Natural killer cell (primary cell): ENCODE measurements at regions of chr17 and their contacts with region 1.

Region 1: GRCh38 chr17:18314731-18315561 is at the starts of genes SMCR8 and TOP3A:
- DNase-seq: peak; percentile 92 to 97
- ATAC-seq: peak; percentile 91 to 97 (median 92)
- H3K4me3 ChIP-seq: peak within 1 kb of the TSS; percentile 81
- H3K4me3 Mint-ChIP-seq: peak within 1 kb of the TSS; percentile 97
- H3K27ac ChIP-seq: peak within 1 kb of the TSS; percentile 89
- H3K27ac Mint-ChIP-seq: peak within 1 kb of the TSS; percentile 91 to 99
- H3K4me1 ChIP-seq: peaks cover 57% of the 10 kb centered on the region
- H3K4me1 Mint-ChIP-seq: peaks cover 73 to 78% of the 10 kb centered on the region in 2 donors
- H3K27me3 ChIP-seq: no peaks in the 10 kb centered on the region
- H3K27me3 Mint-ChIP-seq: no peaks in the 10 kb centered on the region
- CTCF ChIP-seq: no peak
- total RNA-seq, gene SMCR8: 33.5 to 48.5 (median 39.2) TPM
- total RNA-seq, gene TOP3A: 38.1 to 59.7 (median 53.2) TPM

Region 2: DNA sequence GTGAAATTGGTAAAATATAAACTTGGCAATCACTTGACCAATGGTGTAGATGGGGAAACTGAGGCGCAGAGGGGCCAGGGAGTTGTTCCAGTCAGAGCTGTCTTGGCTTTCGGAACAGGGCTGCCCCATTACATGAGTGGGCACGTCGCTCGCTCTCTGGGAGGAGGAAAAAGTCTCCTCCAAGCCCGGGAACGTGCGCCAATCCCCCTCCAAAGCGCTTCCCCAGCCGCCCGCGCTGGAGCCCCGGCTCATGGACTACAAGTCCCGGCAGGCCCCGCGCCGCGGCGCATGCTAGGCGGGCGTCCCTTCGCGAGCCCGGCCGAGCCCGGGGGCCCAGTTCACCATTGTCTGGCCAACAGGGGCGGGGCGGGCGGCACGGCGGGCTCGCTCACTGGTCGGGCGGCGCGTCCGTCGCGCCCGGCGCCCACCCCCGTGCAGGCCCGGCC is 89.8 kb before region 1 on chr17:
- intact Hi-C with region 1: loop called (anchors 1 kb)
- DNase-seq: peak; percentile 95 to 96
- ATAC-seq: peak; percentile 97 to 99 (median 98)
- H3K4me3 ChIP-seq: peak overlapping the region; percentile 20
- H3K4me3 Mint-ChIP-seq: peak overlapping the region; percentile 53
- H3K27ac ChIP-seq: peak overlapping the region; percentile 49
- H3K27ac Mint-ChIP-seq: peak overlapping the region; percentile 31 to 82
- H3K4me1 ChIP-seq: peaks cover 19% of the 10 kb centered on the region
- H3K4me1 Mint-ChIP-seq: peaks cover 27 to 28% of the 10 kb centered on the region in 2 donors
- H3K27me3 ChIP-seq: no peaks in the 10 kb centered on the region
- H3K27me3 Mint-ChIP-seq: no peaks in the 10 kb centered on the region
- CTCF ChIP-seq: no peak

Region 3: DNA sequence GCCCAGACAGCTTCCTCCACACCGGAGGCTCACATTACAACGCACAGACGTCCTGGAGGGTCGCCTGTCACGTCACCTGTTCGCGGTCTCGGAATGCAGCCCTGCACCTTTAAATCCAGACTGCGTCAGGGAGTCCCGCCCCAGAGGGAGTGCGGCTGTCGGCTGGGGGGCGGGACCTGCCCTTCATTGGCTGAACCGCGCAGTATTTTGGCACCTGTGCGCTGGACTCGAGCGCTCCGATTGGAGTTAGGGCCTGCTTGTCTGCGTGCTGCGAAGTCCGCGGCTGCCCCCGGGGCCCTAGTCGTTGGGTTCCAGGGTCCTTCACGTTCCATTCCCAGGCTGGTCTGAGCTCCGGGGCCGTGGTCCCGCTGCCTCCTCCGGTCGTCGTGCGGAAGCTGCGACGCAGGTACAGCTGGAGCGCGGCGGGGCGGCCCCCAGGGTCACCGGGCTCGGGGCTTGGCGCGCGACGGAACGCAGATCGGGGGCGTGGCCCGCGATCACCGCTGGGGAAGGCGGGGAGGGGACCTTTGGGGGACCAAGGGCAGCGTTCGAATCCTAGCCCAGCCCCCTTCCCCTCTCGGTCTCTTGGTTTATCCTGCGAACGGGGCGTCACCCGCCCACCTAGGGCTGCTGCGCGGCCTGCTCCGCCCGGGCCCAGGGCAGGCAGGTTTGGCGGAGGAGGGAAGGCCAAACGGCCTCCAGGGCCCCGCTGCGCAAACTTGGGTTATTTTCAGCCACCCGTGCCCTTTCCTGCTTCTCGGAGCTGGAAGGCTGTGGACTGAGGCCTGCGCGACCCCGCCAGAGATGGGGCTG is 54.4 kb before region 1 on chr17 and contains the start of gene MIEF2:
- intact Hi-C with region 1: loop called (anchors 2 kb)
- DNase-seq: peak; percentile 88 to 95
- ATAC-seq: peak; percentile 87 to 92 (median 90)
- H3K4me3 ChIP-seq: peak within 1 kb of the TSS; percentile 76
- H3K4me3 Mint-ChIP-seq: peak within 1 kb of the TSS; percentile 83
- H3K27ac ChIP-seq: peak within 1 kb of the TSS; percentile 88
- H3K27ac Mint-ChIP-seq: peak within 1 kb of the TSS; percentile 70 to 81
- H3K4me1 ChIP-seq: peaks cover 51% of the 10 kb centered on the region
- H3K4me1 Mint-ChIP-seq: peaks cover 17 to 36% of the 10 kb centered on the region in 2 donors
- H3K27me3 ChIP-seq: no peaks in the 10 kb centered on the region
- H3K27me3 Mint-ChIP-seq: no peaks in the 10 kb centered on the region
- CTCF ChIP-seq: no peak
- total RNA-seq, gene MIEF2: 10.6 to 12.8 (median 11.3) TPM

Region 4: DNA sequence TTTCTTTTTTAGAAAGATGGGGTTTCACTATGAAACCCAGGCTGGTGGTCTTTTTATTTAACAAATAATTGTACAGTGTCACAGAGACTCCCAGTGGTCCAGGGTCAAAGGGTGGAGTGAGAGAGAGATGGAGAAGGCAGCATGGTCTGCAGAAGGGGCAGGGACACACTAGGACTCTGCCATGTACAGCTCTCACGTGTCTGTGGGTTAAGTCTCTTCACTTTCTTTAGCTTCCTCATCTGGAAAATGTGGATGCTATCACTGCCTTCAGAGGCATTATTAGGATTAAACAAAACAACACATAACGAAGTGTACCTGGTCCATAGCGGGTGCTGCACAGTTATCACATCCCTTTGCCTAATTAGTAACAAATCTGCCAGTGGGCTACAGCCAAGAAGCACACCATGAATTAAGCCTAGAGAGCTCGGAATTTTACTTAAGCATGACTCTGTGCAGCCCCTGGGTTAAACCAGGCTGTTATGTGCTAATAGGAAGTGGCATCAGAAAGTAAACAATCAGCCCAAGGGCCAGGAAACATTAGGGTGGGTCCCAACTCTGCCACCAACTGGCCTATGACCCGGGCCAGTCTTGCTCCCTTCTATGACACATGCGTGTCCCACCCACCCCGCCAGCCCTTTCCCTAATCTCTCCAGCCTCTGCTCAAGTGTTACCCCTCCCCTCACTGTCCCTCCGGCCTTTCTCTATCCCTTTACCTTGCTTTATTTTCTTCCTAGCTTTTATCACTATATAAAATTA is 14.0 kb before region 1 on chr17:
- intact Hi-C with region 1: no loop called
- DNase-seq: no peak
- ATAC-seq: peak in 1 of 3 donors; percentile 32
- H3K4me3 ChIP-seq: no peak overlapping the region
- H3K4me3 Mint-ChIP-seq: no peak overlapping the region
- H3K27ac ChIP-seq: no peak overlapping the region
- H3K27ac Mint-ChIP-seq: peak overlapping the region in 1 of 2 donors; percentile 5
- H3K4me1 ChIP-seq: no peaks in the 10 kb centered on the region
- H3K4me1 Mint-ChIP-seq: no peaks in the 10 kb centered on the region
- H3K27me3 ChIP-seq: no peaks in the 10 kb centered on the region
- H3K27me3 Mint-ChIP-seq: no peaks in the 10 kb centered on the region
- CTCF ChIP-seq: no peak